Psoas muscle (tissue), 8 donors: ENCODE measurements at regions of chr3 and their contacts with region 1.

Region 1: DNA sequence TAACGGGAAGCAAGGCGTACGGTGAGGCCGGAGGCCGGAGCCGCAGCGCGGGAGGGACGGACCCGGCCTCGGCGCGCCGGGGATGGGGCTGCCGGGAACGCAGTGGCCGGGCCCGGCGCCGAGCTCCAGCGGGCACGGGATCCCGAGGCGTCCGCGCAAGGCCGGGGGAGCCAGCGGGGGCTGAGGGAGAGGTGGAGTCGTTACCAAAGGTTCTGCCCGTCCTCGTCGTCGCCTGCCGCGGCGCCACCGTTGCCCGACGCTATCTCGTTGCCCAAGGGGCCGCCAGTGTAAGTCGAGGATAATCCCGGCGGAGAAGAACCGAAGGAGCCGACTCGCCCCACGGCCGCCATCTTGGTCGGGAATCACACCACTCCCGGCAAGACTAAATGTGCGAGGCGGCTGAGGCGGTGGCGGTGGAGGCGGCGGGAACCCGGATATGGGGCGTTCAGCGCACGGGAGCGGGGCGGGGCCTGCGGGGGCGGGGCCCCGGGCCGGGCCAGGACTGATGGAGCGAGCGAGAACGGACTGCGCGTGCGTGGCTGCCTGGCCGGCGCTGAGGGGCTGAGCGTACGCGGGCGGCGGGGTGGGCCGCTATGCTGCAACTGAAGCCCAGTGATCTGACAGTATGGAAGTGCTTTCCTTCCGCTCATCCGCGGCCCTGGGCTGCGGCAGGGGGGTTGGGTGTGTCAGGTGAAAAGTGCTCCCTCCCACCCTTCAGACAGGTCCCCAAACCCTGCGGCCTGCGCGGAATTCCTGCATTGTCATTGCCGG is at the start of gene DYNC1LI1:
- DNase-seq: peak; percentile 97 to 98
- ATAC-seq: peak; percentile 97 to 99 (median 98)
- H3K4me3 ChIP-seq: peak within 1 kb of the TSS; percentile 71
- H3K27ac ChIP-seq: peak within 1 kb of the TSS; percentile 90
- H3K4me1 ChIP-seq: peaks cover 18% of the 10 kb centered on the region
- H3K27me3 ChIP-seq: no peaks in the 10 kb centered on the region
- CTCF ChIP-seq: no peak
- total RNA-seq, gene DYNC1LI1: 44.0 to 50.4 (median 47.4) TPM

Region 2: GRCh38 chr3:32077260-32078084 is 493.1 kb before region 1 on chr3:
- intact Hi-C with region 1: no loop called
- DNase-seq: no peak
- ATAC-seq: peak; percentile 42 to 83 (median 56)
- H3K4me3 ChIP-seq: peak overlapping the region; percentile 33
- H3K27ac ChIP-seq: peak overlapping the region; percentile 43
- H3K4me1 ChIP-seq: no peaks in the 10 kb centered on the region
- H3K27me3 ChIP-seq: no peaks in the 10 kb centered on the region
- CTCF ChIP-seq: no peak

Region 3: DNA sequence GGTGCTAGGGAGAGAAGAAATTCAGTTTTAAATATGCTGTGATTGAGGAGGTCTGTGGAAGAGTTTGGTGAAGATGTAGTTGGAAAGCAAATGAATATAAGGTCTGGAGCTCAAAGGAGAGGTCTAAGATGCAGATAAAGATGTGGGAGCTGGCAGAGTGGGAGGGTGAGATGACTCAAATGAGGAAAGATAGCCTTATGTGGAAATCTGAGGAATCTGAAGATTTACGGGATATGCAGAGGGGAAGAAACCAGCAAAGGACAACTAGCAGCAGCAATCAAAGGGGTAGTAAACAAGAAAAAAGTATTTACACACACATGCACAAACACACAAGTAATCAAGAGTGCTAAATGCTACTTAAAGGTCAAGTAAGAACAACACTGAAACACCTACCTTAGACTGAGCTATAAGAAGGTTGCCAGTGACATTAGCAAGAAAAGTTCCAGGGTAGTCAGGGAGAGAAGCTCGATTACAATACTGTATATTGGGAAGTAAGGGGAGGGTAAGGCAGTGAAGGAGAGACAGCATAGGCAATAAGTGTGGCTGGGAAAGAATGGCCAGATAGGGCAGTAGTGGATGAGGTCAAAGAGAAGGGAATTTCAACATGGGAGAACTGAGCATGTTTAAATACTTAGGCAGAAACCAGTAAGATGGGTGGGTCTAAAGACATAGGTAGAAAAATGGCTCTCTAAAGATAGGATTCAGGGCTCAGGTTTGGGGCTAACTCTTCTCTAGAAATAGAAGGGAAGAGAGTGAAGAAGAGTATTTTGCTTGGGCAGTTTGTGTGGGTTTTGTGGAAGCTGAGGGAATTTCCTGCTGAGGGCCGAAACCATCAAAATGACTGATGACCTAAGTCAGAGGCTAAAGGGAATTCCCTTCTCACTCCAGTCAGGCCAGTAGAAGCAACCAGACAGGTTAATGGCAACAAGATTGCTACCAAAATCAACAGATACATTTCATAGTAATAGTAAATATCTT is 76.9 kb before region 1 on chr3:
- intact Hi-C with region 1: loop called in 1 of 2 experiments (anchors 1 kb)
- DNase-seq: no peak
- ATAC-seq: no peak
- H3K4me3 ChIP-seq: no peak overlapping the region
- H3K27ac ChIP-seq: no peak overlapping the region
- H3K4me1 ChIP-seq: peaks cover 7% of the 10 kb centered on the region
- H3K27me3 ChIP-seq: no peaks in the 10 kb centered on the region
- CTCF ChIP-seq: no peak

Region 4: DNA sequence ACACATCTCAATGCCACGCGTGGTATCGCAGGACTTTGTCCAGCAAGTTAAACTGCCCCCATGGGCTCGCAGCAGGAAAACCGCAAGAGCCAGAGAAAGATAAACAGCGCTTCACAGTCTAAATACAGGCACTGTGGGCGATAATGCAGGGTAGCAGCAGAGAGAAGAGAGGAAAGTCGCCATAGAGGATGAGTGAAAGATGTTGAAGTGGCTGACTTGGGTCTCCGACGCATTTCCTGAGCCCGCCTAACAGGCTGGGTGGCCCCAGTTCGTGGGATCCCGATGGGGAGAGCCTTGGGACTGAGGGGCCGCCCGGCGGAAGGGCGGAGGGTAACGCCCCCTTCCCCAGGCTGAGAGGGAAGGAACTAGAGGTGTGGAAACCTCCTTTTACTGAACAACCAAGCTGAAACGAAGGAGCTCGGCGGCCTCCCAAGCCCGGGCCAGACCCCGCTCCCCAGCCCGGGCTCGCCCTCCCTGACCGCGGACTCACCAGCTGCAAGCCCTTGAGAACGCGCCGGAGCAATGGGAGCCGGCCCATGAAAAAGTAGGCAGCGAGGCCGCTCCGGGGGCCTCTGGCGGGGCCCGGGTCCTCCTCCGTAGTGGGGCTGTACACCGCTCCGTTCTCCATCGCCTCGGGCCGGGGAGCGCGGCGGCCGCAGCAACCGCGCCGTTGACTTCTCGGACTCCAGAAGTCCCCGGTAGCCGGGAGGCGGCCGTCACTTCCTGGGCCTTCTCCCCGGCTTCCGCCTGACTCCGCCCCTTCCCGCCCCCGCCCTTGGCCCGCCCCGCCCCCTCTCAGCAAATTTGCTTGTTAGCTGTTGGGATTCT is 68.3 kb before region 1 on chr3 and contains the start of gene CMTM6:
- intact Hi-C with region 1: loop called in 1 of 2 experiments (anchors 5 kb)
- DNase-seq: peak; percentile 82 to 90
- ATAC-seq: peak; percentile 95 to 99 (median 96)
- H3K4me3 ChIP-seq: peak within 1 kb of the TSS; percentile 98
- H3K27ac ChIP-seq: peak within 1 kb of the TSS; percentile 98
- H3K4me1 ChIP-seq: peaks cover 15% of the 10 kb centered on the region
- H3K27me3 ChIP-seq: no peaks in the 10 kb centered on the region
- CTCF ChIP-seq: no peak
- total RNA-seq, gene CMTM6: 4.5 to 8.0 (median 5.6) TPM

Region 5: DNA sequence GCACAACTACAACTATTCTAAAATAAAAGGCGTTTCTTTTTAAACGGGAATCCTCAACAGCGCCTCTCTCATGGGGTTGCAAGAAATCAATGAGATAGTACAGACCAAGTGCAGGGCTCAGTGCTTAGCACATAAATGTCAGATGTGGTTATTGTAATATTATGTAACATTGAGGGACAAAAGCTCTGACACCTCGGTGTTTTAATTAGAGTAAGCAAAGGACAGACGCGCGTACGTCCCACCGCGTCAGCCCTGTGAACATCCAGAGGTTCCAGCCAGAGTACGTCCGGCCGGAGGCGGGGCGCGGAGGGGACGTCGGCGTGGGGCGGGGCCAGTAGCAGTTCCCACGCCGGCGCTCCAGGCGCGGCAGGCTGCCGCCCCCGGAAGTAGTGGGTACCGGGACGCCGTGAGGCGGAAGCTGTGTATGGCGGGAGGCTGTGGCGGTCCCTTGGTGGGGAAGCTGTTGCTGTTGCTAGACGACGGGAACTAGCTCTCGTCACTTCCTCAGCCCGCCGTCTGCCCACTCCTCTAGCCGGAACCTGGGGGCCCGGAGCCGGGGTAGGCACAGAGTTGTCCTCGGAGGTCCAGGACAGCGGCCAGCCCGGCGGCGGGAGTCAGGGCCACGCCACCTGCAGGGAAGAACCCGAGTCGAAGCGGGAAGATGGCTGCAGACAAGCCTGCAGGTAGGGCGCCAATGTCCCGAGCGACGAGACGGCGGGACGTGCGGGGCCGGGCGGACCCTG is 114.4 kb after region 1 on chr3 and contains the start of gene CNOT10:
- intact Hi-C with region 1: loop called (anchors 5 to 10 kb)
- DNase-seq: peak; percentile 95 to 97
- ATAC-seq: peak; percentile 99 to 100 (median 100)
- H3K4me3 ChIP-seq: peak within 1 kb of the TSS; percentile 85
- H3K27ac ChIP-seq: peak within 1 kb of the TSS; percentile 78
- H3K4me1 ChIP-seq: peaks cover 10% of the 10 kb centered on the region
- H3K27me3 ChIP-seq: no peaks in the 10 kb centered on the region
- CTCF ChIP-seq: peak; percentile 22
- total RNA-seq, gene CNOT10: 10.3 to 18.1 (median 12.7) TPM